RWPE1 (cell line): ENCODE measurements at regions of chr5 and their contacts with region 1.

Region 1: GRCh38 chr5:168908207-168908606 is 329.0 kb upstream of the PANK3 start:
- DNase-seq: peak; percentile 23
- H3K27ac ChIP-seq: no peak overlapping the region
- CTCF ChIP-seq: no peak

Region 2: GRCh38 chr5:168647083-168647482 is 261.1 kb before region 1 on chr5:
- CTCF ChIA-PET with region 1: no interaction called
- POLR2A ChIA-PET with region 1: no interaction called
- DNase-seq: peak; percentile 80
- H3K27ac ChIP-seq: no peak overlapping the region
- CTCF ChIP-seq: no peak

Region 3: DNA sequence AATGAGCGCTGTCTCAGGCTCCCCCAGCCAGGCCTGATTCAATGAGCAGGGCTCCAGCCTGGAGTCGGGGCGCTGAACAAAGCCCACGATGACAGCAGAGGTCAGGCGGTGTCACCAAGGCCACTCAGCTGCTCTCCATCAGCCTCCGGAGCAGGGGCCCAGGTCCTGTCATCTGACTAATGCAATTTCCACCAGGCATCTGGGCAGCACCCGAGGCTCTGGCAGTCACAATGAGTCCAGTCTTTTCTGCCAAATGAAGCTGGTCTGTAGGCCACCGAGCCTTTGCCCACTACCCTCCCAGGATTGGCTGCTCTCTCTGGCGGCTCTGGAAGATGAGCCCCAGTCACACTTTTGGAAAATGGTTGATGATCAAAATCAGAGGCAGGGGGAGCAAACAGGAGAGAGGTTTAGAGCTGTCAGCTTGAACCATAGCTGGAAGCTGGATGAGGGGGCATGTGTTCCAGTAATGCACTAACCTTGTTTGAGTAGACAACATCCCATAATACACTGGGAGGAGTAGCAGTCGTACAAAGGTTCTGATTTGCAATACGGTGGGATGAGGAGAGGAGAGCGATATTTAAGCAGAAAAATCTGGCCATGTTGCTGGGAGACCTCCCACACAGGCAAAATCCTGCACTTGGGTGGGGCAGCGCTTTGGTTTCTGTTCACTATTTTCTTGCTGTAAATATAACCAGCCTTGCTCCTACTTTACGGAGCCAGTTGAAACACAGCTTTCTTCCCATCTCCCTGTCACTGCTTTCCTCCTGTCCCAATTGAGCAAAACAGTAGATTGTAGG is 22.7 kb before region 1 on chr5:
- CTCF ChIA-PET with region 1: interaction called, 10 read pairs
- POLR2A ChIA-PET with region 1: no interaction called
- DNase-seq: no peak
- H3K27ac ChIP-seq: no peak overlapping the region
- CTCF ChIP-seq: no peak